Activated CD4-positive, alpha-beta memory T cell treated with anti-CD3 and anti-CD28 coated beads for 36 hours (primary cell): ENCODE measurements at regions of chr3 and their contacts with region 1.

Region 1: GRCh38 chr3:15300323-15301078 is 31.9 kb downstream of the SH3BP5 start:
- DNase-seq: peak; percentile 37
- H3K4me3 Mint-ChIP-seq: no peak overlapping the region
- H3K27ac Mint-ChIP-seq: peak overlapping the region; percentile 71
- H3K4me1 Mint-ChIP-seq: peaks cover 81% of the 10 kb centered on the region
- H3K27me3 Mint-ChIP-seq: no peaks in the 10 kb centered on the region

Region 2: GRCh38 chr3:15319575-15319974 is 19.1 kb after region 1 on chr3:
- CTCF ChIA-PET with region 1: interaction called, 6 read pairs
- POLR2A ChIA-PET with region 1: interaction called, 13 read pairs
- intact Hi-C with region 1: no loop called
- DNase-seq: no peak
- H3K4me3 Mint-ChIP-seq: no peak overlapping the region
- H3K27ac Mint-ChIP-seq: peak overlapping the region; percentile 52
- H3K4me1 Mint-ChIP-seq: peaks cover 83% of the 10 kb centered on the region
- H3K27me3 Mint-ChIP-seq: no peaks in the 10 kb centered on the region

Region 3: GRCh38 chr3:15339786-15340215 is 39.3 kb after region 1 on chr3:
- CTCF ChIA-PET with region 1: no interaction called
- POLR2A ChIA-PET with region 1: no interaction called
- intact Hi-C with region 1: no loop called
- DNase-seq: no peak
- H3K4me3 Mint-ChIP-seq: no peak overlapping the region
- H3K27ac Mint-ChIP-seq: no peak overlapping the region
- H3K4me1 Mint-ChIP-seq: peaks cover 19% of the 10 kb centered on the region
- H3K27me3 Mint-ChIP-seq: no peaks in the 10 kb centered on the region